ENCODE measurements at regions of chr15 and their contacts with region 1.

Region 1: GRCh38 chr15:25508369-25509002 is 69.7 kb upstream of the UBE3A start:
- DNase-seq: no peak
- H3K4me3 Mint-ChIP-seq: no peak overlapping the region
- H3K27ac Mint-ChIP-seq: no peak overlapping the region
- H3K4me1 Mint-ChIP-seq: no peaks in the 10 kb centered on the region
- H3K27me3 Mint-ChIP-seq: no peaks in the 10 kb centered on the region
- CTCF ChIP-seq: peak; percentile 41

Region 2: GRCh38 chr15:25401501-25401900 is 107.0 kb before region 1 on chr15:
- CTCF ChIA-PET with region 1: no interaction called
- POLR2A ChIA-PET with region 1: no interaction called
- intact Hi-C with region 1: no loop called
- DNase-seq: no peak
- H3K4me3 Mint-ChIP-seq: no peak overlapping the region
- H3K27ac Mint-ChIP-seq: peak overlapping the region; percentile 10
- H3K4me1 Mint-ChIP-seq: peaks cover 18% of the 10 kb centered on the region
- H3K27me3 Mint-ChIP-seq: no peaks in the 10 kb centered on the region
- CTCF ChIP-seq: no peak

Region 3: GRCh38 chr15:25433118-25433865 is 75.2 kb before region 1 on chr15:
- CTCF ChIA-PET with region 1: no interaction called
- POLR2A ChIA-PET with region 1: no interaction called
- intact Hi-C with region 1: no loop called
- DNase-seq: no peak
- H3K4me3 Mint-ChIP-seq: no peak overlapping the region
- H3K27ac Mint-ChIP-seq: no peak overlapping the region
- H3K4me1 Mint-ChIP-seq: peaks cover 24% of the 10 kb centered on the region
- H3K27me3 Mint-ChIP-seq: no peaks in the 10 kb centered on the region
- CTCF ChIP-seq: no peak

Region 4: GRCh38 chr15:25525741-25526140 is 17.3 kb after region 1 on chr15:
- CTCF ChIA-PET with region 1: interaction called, 10 read pairs
- POLR2A ChIA-PET with region 1: no interaction called
- intact Hi-C with region 1: no loop called
- DNase-seq: no peak
- H3K4me3 Mint-ChIP-seq: no peak overlapping the region
- H3K27ac Mint-ChIP-seq: no peak overlapping the region
- H3K4me1 Mint-ChIP-seq: no peaks in the 10 kb centered on the region
- H3K27me3 Mint-ChIP-seq: no peaks in the 10 kb centered on the region
- CTCF ChIP-seq: no peak

Region 5: GRCh38 chr15:26864664-26865191 is 1356.2 kb after region 1 on chr15:
- CTCF ChIA-PET with region 1: interaction called, 14 read pairs
- POLR2A ChIA-PET with region 1: no interaction called
- intact Hi-C with region 1: no loop called
- DNase-seq: no peak
- H3K4me3 Mint-ChIP-seq: no peak overlapping the region
- H3K27ac Mint-ChIP-seq: no peak overlapping the region
- H3K4me1 Mint-ChIP-seq: no peaks in the 10 kb centered on the region
- H3K27me3 Mint-ChIP-seq: no peaks in the 10 kb centered on the region
- CTCF ChIP-seq: no peak